H1 (cell line): ENCODE measurements at regions of chr9 and their contacts with region 1.

Region 1: DNA sequence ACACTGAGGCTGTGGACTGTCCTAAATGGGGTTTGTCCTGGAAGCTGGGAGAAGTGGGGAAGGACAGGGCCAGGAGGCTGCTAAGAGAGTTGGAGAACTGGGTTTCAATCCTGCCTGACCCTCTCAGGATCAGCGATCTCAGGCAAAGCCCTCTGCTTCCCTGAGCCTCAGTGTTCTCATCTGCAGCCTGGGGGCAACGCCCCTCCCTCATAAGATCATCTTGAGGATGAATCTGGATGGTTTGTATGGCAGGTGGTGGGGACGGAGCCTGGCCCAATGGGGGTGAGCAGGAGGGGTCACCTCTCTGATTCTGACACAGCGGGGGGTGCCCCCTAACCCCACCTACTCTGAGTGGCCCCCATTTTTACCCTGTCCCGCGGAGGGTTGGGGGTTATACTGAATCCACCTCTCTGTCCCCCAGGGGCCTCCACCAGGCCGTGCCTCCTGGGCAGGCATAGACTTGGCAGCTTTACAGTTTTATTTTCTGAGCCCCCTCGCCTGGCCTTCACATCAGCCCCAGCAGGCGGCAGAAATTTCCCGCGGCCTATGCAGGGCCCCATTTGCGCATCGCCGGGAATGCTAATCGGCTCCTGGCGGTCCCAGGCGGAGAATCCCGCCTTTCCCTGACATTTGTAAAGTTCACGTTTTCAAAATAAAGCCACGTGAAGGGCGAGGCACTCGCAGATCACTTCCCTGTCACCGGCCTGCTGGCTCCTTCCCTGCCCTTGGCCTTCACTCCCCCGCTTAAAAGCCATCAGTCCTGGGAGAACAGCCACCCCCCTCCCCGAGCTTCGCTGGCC is 17.8 kb upstream of the LAMC3 start:
- DNase-seq: no peak
- H3K4me3 ChIP-seq: no peak overlapping the region
- H3K27ac ChIP-seq: no peak overlapping the region
- H3K4me1 ChIP-seq: peaks cover 3 to 20% (median 9%) of the 10 kb centered on the region in 4 experiments; a peak in 5 of 7 replicates
- H3K27me3 ChIP-seq: no peaks in the 10 kb centered on the region
- CTCF ChIP-seq: no peak
- EP300 ChIP-seq: no peak
- POLR2A ChIP-seq: no peak
- RAD21 ChIP-seq: no peak

Region 2: DNA sequence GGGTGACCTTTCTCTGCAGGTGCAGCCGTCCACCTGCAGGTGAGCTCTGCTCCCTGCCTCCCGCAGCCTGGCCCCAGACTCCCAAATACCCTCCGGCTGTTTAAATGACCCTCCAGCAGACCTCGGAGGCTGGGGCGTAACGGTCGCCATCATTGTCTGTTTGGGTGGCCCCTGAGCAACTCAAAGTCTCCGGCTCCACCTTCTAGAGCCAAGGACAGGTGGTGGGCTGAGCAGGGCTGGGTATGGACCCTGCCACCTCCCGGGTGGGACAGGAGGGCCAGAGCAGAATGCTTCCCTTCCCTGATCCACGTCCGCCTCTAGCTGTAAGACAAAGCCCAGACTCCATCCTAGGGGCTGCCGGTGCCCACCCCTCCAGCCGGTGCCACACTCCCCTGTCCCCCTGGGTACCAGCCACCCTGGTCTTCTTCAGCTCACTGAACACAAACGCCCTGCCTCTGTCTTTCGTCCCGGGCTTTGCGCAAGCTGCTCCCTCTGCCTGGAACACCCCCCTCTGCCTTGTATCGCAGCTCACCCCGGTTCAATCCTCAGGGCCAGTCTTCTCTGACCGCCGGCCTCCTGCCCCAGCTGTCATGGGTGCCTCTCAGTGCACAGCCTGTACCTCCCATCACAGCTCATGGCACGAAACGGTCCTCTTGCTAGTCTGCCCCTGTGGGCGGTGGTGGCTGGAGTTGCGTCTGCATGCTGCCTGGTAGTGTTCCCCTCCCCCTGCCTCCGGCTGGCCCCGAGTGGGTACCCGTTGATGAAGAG is 17.8 kb before region 1 on chr9:
- CTCF ChIA-PET with region 1: interaction called, 17 read pairs
- POLR2A ChIA-PET with region 1: no interaction called
- DNase-seq: no peak
- H3K4me3 ChIP-seq: no peak overlapping the region
- H3K27ac ChIP-seq: no peak overlapping the region
- H3K4me1 ChIP-seq: peaks cover 0 to 3% (median 0%) of the 10 kb centered on the region in 4 experiments; a peak in 1 of 7 replicates
- H3K27me3 ChIP-seq: no peaks in the 10 kb centered on the region; a peak in 1 of 7 replicates
- CTCF ChIP-seq: peak in 2 of 3 experiments; percentile 9 to 12; a peak in 2 of 4 replicates
- EP300 ChIP-seq: no peak
- POLR2A ChIP-seq: no peak
- RAD21 ChIP-seq: no peak

Region 3: DNA sequence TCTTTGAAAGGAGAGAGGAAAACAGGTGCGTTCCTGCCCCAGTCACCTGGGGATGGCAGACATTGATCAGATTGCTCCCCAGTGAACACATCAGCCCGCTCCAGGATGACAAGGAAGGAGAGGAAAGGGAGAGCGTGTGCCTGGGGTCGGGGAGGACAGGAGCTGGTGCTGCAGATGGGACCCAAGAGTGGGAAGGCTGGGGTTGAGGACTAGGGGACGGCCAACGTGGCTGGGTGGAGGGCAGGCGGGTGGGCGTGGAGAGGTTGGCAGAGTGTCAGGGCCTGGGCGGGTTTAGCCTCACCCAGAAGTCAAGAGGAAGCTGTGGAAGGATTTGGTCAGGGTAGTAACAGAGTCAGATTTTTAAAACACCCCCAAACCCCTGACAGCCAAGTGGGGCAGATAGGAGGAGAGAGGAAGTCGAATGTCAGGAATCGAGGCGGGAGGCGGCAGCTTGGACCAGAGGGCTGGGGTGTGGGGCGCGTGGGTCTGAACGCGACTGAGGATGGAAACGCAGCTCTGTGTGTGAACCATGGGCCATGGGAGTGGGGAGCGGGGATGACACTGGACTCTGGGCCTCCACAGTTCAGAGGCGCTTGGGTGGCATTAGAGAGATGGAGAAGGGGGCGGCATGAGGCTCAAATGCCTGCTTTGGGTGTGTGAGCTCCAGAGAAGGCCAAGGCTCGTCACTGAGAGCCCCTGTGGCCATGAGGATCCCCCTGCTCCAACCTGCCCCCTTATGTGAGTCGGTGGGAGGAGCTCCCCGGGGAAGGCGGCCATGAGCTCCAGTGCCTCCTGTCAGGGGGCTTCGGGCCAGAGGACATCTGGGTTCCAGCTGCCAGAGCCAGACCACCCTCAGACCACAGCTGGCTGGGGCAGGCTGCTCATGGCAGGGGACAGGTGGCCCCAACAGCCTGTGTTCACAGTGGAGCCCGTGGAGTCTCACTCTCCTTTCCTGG is 42.4 kb after region 1 on chr9:
- CTCF ChIA-PET with region 1: no interaction called
- POLR2A ChIA-PET with region 1: no interaction called
- DNase-seq: no peak
- H3K4me3 ChIP-seq: no peak overlapping the region
- H3K27ac ChIP-seq: no peak overlapping the region
- H3K4me1 ChIP-seq: no peaks in the 10 kb centered on the region
- H3K27me3 ChIP-seq: no peaks in the 10 kb centered on the region
- CTCF ChIP-seq: no peak
- EP300 ChIP-seq: no peak
- POLR2A ChIP-seq: no peak
- RAD21 ChIP-seq: no peak